ENCODE measurements at regions of chr5 and their contacts with region 1.

Region 1: GRCh38 chr5:138223532-138223931 is 10.4 kb upstream of the CDC23 start:
- DNase-seq: no peak
- ATAC-seq: no peak

Region 2: DNA sequence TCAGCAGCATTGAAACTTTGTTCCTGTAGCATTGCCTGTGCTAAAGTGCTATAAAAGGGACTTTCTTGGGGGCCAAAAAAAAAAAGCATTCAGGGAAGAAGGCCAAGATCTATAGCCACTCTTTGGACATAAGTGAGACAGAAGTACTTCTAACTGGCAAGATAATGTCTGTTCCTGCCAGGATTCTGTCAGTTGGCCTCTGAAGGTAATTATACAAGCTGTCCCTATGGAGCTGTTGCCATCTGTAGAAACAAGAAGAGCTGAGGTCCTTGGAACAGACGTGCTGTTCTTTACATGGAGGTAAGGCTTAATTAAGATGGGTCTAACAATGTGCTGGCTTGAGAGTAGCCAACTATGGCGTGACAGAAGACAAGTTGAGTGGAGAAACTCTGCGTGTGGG is 34.9 kb before region 1 on chr5:
- intact Hi-C with region 1: no loop called
- DNase-seq: no peak
- ATAC-seq: no peak

Region 3: DNA sequence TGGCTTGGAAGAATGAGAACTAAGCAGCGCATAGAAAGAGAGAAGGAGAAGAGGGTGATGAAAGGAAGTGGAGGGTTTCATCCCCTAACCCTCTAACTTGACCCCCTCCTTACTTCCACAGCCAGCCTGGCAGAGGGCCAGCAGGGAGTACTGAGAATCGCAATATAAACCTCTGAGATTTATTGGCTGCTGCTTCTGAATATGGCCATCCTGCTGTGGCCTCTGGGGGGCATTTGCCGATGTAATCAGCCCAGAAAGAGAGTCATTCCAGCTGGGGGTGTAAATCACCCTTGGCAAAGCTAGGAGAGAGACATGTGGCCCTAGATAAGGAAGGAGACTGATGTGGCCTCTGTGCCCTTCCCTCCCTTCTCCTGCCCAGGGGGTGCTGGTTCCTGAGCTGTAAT is 51.8 kb after region 1 on chr5:
- intact Hi-C with region 1: loop called in 1 of 2 experiments (anchors 5 kb)
- DNase-seq: no peak
- ATAC-seq: peak in 1 of 2 donors; percentile 38

Region 4: DNA sequence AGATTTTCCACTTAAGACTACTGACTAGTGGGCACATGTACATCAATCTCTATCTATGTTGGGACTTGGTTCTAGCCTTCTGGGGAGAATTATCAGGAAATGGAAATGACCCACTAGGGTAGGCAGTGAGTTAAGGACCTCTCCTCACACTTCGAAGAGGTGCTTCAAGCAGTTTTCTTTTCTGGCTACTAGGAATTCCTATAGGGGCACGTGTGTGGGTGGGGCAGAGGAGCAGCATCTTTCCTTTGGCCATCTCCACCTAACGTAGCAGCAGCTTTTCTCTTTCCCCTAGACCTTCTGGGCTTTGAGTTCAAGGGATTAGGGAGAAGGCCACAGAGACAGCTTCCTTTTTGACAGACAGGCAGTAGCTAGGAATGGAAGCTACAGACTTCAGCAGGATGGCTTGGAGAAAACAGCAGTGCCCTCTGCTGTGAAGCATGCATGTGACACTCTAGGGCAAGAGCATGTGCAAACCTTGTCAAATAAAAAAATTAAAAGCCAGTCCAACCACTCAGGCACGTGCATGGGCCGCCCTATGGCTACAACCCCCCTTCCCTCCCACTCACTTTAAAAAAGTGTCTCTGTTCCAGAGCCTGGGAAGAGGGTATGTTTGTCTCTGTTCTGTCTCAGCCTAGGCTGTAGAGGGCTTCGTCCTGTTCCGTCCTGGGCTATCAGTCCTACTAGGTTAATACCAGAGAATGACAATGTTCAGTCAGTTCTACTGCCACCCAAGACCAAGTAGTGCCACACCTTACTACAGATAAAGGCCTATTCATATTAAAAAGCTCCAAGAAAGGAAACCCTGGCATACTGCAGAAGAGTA is 59.6 kb after region 1 on chr5:
- intact Hi-C with region 1: loop called (anchors 1 to 5 kb)
- DNase-seq: peak; percentile 26
- ATAC-seq: peak; percentile 76 to 96

Region 5: DNA sequence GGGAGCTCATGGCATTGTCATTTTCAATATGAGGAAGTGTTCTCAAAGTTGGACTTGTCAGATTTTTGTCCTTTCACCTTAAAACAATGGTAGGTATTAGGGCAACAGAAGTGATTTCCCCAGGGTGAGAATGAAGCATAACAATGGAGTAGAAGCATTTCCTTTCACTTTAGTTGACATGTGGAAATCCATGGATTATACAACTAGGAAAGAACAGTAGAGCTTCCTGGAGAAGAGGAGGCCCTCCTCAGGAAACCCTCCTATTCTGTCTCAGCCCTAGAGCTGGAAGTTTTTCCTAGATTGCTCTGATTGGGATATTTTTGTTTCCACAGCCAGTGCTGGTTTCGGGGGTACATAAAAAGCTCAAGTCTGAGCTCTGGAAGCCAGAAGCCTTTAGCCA is 201.5 kb after region 1 on chr5:
- intact Hi-C with region 1: no loop called
- DNase-seq: no peak
- ATAC-seq: peak; percentile 30 to 60